Heart right ventricle (tissue), 16 donors: ENCODE measurements at regions of chr1 and their contacts with region 1.

Region 1: DNA sequence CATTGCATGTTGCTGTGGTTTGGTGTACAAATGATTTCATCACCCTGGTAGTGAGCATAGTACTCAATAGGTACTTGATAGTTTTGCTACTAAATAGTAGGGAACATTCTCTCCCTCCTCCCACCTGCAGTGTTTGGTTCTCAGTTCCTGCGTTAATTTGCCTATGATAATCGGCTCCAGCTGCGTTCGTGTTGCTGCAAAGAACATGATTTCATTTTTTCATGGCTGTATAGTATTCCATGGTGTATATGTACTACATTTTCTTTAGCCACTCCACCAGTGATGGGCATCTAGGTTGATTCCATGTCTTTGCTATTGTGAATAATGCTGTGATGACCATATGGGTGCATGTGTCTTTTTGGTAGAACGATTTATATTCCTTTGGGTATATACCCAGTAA is 903.4 kb downstream of the TTLL7 start:
- DNase-seq: no peak
- ATAC-seq: no peak
- H3K4me3 ChIP-seq: no peak overlapping the region
- H3K27ac ChIP-seq: no peak overlapping the region
- H3K4me1 ChIP-seq: no peaks in the 10 kb centered on the region
- H3K27me3 ChIP-seq: no peaks in the 10 kb centered on the region
- CTCF ChIP-seq: no peak

Region 2: GRCh38 chr1:82837766-82838465 is 257.7 kb before region 1 on chr1:
- intact Hi-C with region 1: no loop called
- DNase-seq: no peak
- ATAC-seq: peak in 2 of 8 donors; percentile 37 to 48
- H3K4me3 ChIP-seq: no peak overlapping the region
- H3K27ac ChIP-seq: no peak overlapping the region
- H3K4me1 ChIP-seq: peaks cover 0 to 9% (median 0%) of the 10 kb centered on the region in 9 donors
- H3K27me3 ChIP-seq: no peaks in the 10 kb centered on the region
- CTCF ChIP-seq: no peak

Region 3: DNA sequence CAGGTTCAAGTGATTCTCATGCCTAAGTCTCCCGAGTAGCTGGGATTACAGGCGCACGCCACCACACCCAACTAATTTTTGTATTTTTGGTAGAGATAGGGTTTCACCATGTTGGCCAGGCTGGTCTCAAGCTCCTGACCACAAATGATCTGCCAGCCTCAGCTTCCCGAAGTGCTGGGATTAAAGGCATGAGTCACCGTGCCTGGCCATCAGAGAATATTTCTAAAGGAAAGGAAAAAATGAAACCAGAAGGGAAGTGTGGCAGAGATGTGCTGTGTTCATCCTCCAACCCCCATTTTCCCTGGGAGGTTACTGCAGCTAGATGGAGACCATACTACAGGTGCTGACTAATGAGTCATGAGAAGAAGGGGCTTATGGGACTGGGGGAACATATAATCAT is 60.7 kb before region 1 on chr1:
- intact Hi-C with region 1: no loop called
- DNase-seq: no peak
- ATAC-seq: no peak
- H3K4me3 ChIP-seq: no peak overlapping the region
- H3K27ac ChIP-seq: no peak overlapping the region
- H3K4me1 ChIP-seq: no peaks in the 10 kb centered on the region
- H3K27me3 ChIP-seq: no peaks in the 10 kb centered on the region
- CTCF ChIP-seq: no peak

Region 4: DNA sequence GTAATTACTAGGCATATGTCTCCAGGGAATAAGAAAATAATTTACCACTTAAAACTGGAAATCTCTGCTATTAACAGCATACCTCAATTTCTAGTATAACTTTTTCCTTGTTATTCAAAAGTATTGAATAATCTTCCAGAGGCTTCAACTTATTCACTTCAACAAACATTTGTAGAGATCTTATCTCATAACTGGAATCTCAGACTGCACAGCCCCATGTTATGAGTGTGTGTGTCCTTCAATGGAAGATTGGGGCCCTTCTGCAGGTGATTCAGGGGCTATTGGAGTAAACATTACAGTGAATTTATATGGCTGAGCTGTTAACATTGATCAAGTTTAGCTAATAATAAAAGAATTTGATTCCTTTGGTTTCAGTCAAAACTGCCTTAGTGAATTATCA is 42.7 kb before region 1 on chr1:
- intact Hi-C with region 1: loop called in 1 of 10 experiments (anchors 2 kb)
- DNase-seq: no peak
- ATAC-seq: no peak
- H3K4me3 ChIP-seq: no peak overlapping the region
- H3K27ac ChIP-seq: no peak overlapping the region
- H3K4me1 ChIP-seq: no peaks in the 10 kb centered on the region
- H3K27me3 ChIP-seq: no peaks in the 10 kb centered on the region
- CTCF ChIP-seq: no peak